Dorsolateral prefrontal cortex (tissue), 120 donors: ENCODE measurements at regions of chr18 and their contacts with region 1.

Region 1: GRCh38 chr18:79679111-79679872 is at the start of gene CTDP1:
- DNase-seq: peak; percentile 99 to 100 (median 100)
- H3K4me3 ChIP-seq: peak within 1 kb of the TSS; percentile 57 to 100 (median 94)
- H3K27ac ChIP-seq: peak within 1 kb of the TSS; percentile 87 to 100 (median 98)
- H3K27me3 ChIP-seq: no peaks in the 10 kb centered on the region
- CTCF ChIP-seq: peak in 20 of 56 donors; percentile 7 to 42 (median 25)
- total RNA-seq, gene CTDP1: 12.4 to 26.2 (median 18.1) TPM

Region 2: DNA sequence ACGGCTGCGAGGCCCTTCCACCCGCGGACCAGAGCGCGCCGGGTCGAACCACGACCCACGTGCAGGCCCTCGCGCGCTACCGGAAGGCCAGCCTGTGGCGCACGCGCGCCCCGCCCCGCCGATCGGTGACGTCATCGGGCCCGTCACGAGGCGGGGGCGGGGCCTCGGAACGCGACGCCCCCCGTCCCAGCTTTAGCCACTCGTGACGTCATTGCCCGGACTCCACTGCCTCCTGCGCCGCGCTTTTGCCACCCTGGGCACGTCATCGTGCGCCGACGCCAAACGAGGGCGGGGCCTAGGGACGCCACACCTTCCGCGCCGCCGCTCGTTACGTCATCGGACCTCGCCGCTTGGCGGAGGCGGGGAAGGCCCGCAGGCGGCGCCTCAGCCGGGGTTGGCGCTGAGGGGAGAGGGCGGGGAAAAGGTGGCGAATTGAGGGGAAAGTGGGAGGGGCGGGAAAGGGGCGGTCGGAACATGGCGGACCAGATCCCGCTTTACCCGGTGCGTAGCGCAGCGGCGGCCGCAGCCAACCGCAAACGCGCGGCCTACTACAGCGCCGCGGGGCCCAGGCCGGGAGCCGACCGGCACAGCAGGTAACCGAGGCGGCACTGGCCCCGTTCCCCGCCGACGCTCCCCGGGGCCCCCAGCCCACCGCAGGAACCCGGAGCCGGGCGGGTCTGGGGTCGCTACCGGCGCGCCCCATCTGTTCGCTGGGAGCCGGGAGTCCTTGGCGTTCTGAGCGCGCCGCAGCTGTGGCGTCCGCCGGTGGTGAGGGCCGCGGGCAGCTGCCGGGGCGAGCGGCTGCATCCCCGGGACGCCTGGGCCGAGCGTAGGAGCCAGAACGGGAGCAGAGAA is 610.1 kb before region 1 on chr18 and contains the start of gene ATP9B:
- intact Hi-C with region 1: loop called in 1 of 2 experiments (anchors 5 kb)
- DNase-seq: peak; percentile 94 to 99 (median 98)
- H3K4me3 ChIP-seq: peak within 1 kb of the TSS; percentile 48 to 100 (median 97)
- H3K27ac ChIP-seq: peak within 1 kb of the TSS; percentile 40 to 98 (median 94)
- H3K27me3 ChIP-seq: no peaks in the 10 kb centered on the region
- CTCF ChIP-seq: peak in 49 of 56 donors; percentile 4 to 62 (median 37)
- total RNA-seq, gene ATP9B: 67.5 to 145 (median 97.7) TPM

Region 3: GRCh38 chr18:79708412-79708811 is 29.1 kb after region 1 on chr18:
- intact Hi-C with region 1: no loop called
- DNase-seq: no peak
- H3K4me3 ChIP-seq: no peak overlapping the region
- H3K27ac ChIP-seq: peak overlapping the region in 1 of 59 donors; percentile 5
- H3K27me3 ChIP-seq: no peaks in the 10 kb centered on the region
- CTCF ChIP-seq: no peak

Region 4: GRCh38 chr18:79944126-79944741 is 264.9 kb after region 1 on chr18:
- intact Hi-C with region 1: loop called in 1 of 2 experiments (anchors 10 kb)
- DNase-seq: peak in 8 of 10 donors; percentile 20 to 65 (median 50)
- H3K4me3 ChIP-seq: peak overlapping the region in 1 of 59 donors; percentile 10
- H3K27ac ChIP-seq: peak overlapping the region in 12 of 59 donors; percentile 12 to 57 (median 36)
- H3K27me3 ChIP-seq: no peaks in the 10 kb centered on the region
- CTCF ChIP-seq: no peak